ENCODE measurements at regions of chr10 and their contacts with region 1.

Region 1: DNA sequence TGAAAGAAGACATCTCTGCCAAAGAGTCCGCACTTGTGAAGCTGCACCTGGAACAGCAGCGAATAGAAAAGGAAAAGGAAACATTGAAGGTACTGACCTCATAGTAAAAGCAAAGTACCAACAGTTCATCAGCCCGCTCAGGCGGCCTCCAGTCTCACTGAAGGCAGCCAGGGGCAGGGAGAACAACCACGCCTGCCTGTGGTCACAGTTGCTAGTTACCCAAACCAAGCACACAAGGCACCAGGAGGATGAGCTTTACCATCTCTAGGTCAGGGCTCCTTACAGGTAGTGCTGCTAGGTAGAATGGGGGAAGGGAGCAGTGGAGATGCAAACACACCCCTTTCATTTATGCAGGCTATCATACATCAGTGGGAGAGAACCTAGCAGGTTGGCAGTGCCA is 39.8 kb downstream of the CFAP58 start:
- DNase-seq: no peak
- ATAC-seq: no peak
- H3K4me3 Mint-ChIP-seq: no peak overlapping the region
- H3K27ac Mint-ChIP-seq: no peak overlapping the region
- H3K4me1 Mint-ChIP-seq: peaks cover 5% of the 10 kb centered on the region
- H3K27me3 Mint-ChIP-seq: peaks cover 30% of the 10 kb centered on the region

Region 2: GRCh38 chr10:104406715-104407650 is 13.6 kb after region 1 on chr10:
- CTCF ChIA-PET with region 1: interaction called, 11 read pairs
- DNase-seq: no peak
- ATAC-seq: no peak
- H3K4me3 Mint-ChIP-seq: no peak overlapping the region
- H3K27ac Mint-ChIP-seq: no peak overlapping the region
- H3K4me1 Mint-ChIP-seq: peaks cover 3% of the 10 kb centered on the region
- H3K27me3 Mint-ChIP-seq: peaks cover 48% of the 10 kb centered on the region

Measured in activated CD8-positive, alpha-beta memory T cell treated with anti-CD3 and anti-CD28 coated beads, Interleukin-2, amount 10 ng/mL, durations not matched to agents 7 days and 5 days (primary cell).